T-cell (primary cell): ENCODE measurements at regions of chr10 and their contacts with region 1.

Region 1: DNA sequence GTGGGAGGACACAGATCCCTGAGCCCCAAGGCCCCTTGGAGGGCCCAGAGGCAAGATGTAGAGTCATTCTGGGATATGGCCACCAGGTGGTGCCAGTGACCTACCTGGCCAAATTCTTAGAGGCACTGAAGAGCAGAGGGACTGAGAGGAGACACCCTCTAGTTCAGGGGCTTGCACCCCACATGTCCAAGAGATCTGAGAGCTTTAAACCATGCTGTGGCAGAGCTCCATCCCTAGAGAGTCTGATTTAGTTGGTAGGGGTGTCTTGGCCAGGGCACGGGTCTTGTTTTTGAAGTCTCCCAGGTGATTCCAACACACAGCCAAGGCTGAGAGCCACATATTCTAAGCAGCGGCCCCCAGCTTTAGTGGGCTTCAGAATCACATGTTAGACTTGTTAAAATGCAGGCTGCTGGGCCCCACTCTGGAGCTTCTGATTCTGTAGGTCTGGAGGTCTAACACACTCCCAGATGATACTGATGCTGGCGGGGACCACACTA is 52.5 kb downstream of the PRF1 start:
- DNase-seq: peak; percentile 33 to 85 (median 69)
- ATAC-seq: peak; percentile 75 to 85 (median 80)
- H3K4me3 ChIP-seq: no peak overlapping the region
- H3K4me3 Mint-ChIP-seq: no peak overlapping the region
- H3K27ac ChIP-seq: no peak overlapping the region
- H3K27ac Mint-ChIP-seq: no peak overlapping the region
- H3K4me1 ChIP-seq: no peaks in the 10 kb centered on the region
- H3K4me1 Mint-ChIP-seq: no peaks in the 10 kb centered on the region
- H3K27me3 ChIP-seq: peaks cover 0 to 4% of the 10 kb centered on the region in 2 experiments
- H3K27me3 Mint-ChIP-seq: no peaks in the 10 kb centered on the region

Region 2: DNA sequence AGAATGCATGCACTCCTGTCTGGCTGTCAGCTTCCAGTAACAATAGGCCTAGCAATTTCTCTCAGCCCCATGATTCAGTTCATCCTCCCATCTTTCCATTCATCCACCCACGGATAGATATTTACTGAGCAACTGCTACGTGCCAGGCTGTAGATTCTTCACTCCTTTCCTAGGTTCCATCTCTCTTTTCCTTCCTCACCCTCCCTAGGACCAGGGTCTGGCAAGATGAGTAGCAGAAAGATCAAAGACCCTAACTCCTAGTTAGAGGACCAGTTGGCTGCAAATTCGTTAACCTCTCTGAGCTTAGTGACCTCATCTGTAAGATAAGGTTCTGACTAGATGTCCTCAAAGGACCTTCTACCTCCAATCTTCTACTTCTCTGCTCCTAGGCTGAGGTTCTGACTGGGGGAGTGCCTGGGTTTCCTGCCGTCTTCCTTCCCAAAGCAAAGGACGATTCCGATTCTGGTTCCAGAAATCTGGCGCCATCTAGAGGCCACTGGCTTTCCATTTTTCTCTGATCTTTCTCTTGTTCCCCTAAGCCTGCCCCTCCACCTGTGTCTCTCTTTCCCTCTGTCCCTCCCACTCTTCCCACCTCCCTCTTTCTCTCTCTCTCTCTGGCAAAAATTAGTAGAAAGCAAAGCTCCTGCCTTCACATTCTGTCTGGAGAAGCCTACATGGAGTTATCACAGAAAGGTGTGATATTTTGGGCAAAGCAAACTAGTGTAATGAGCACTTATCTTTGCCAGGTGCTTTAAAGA is 208.9 kb after region 1 on chr10:
- CTCF ChIA-PET with region 1: interaction called, 10 to 15 read pairs
- POLR2A ChIA-PET with region 1: no interaction called
- DNase-seq: peak in 34 of 35 experiments; percentile 10 to 80 (median 48)
- ATAC-seq: peak; percentile 37 to 52 (median 48)
- H3K4me3 ChIP-seq: no peak overlapping the region
- H3K4me3 Mint-ChIP-seq: no peak overlapping the region
- H3K27ac ChIP-seq: no peak overlapping the region
- H3K27ac Mint-ChIP-seq: no peak overlapping the region
- H3K4me1 ChIP-seq: no peaks in the 10 kb centered on the region
- H3K4me1 Mint-ChIP-seq: peaks cover 4 to 8% (median 8%) of the 10 kb centered on the region in 3 donors
- H3K27me3 ChIP-seq: peaks cover 0 to 22% of the 10 kb centered on the region in 2 experiments
- H3K27me3 Mint-ChIP-seq: no peaks in the 10 kb centered on the region